Mucosa of descending colon (tissue), 3 donors: ENCODE measurements at regions of chr13 and their contacts with region 1.

Region 1: GRCh38 chr13:46041419-46041839 is 11.1 kb downstream of the ZC3H13 start:
- DNase-seq: no peak
- ATAC-seq: no peak
- H3K4me3 ChIP-seq: no peak overlapping the region
- H3K4me1 ChIP-seq: no peaks in the 10 kb centered on the region
- CTCF ChIP-seq: no peak

Region 2: DNA sequence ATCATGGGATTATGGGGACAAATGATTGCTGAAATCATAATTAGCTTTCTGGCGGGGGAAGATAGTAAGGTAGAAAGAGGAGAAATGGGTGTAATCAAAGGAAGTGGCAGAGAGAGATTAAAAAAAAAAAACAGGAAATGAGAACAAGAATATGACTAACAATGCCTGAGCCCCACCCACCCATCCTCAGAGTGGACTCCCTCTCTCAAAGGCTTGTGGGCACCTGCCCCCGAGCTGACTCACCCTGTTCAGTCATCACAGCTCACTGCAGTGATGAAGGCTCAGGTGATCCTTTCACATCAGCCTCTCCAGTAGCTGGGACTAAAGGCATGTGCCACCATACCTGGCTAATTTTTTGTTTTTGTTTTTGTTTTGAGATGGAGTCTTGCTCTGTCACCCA is 674.1 kb before region 1 on chr13:
- intact Hi-C with region 1: loop called in 1 of 2 experiments (anchors 10 kb)
- DNase-seq: peak; percentile 72 to 90 (median 73)
- ATAC-seq: peak; percentile 95
- H3K4me3 ChIP-seq: no peak overlapping the region
- H3K4me1 ChIP-seq: peaks cover 15% of the 10 kb centered on the region
- CTCF ChIP-seq: no peak

Region 3: DNA sequence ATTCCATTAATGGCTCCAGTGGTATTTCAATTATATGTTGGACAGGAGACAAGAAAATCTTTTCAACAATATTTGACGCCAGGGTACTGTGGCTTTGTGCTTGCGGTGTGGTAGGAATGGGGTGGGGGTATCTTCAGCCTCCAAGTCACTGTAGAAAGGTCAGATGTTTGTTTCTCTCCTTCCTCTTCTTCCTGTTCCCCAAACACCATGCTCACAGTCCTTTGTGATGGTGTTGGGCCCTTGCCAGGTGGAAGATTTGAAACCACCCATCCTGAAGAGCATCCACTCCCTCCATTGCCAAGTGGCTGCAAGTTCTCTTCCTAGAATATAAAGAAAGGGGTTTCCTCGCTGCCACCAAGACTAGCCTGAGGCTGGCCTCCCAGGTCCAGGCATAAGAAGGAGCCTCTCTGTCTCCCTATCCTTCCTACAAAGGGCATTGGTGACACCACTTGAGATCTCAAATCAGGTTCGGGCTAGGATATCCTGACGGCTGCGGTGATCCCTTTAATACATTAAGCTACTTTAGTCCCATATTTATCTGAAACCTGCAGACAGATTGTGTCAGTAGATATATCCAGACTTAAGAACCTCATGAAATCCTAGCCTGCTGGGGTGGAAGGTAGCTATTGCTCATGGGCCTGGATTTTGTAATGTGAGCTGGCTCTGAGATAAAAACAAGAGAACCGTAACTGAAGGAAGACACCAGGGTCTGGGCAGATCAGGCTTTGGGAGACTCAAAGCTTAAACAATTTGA is 125.6 kb before region 1 on chr13:
- intact Hi-C with region 1: no loop called
- DNase-seq: no peak
- ATAC-seq: no peak
- H3K4me3 ChIP-seq: no peak overlapping the region
- H3K4me1 ChIP-seq: no peaks in the 10 kb centered on the region
- CTCF ChIP-seq: no peak